Posterior vena cava (tissue), 2 donors: ENCODE measurements at regions of chr12 and their contacts with region 1.

Region 1: GRCh38 chr12:29552324-29552927 is 54.9 kb upstream of the OVCH1 start:
- DNase-seq: peak; percentile 83

Region 2: DNA sequence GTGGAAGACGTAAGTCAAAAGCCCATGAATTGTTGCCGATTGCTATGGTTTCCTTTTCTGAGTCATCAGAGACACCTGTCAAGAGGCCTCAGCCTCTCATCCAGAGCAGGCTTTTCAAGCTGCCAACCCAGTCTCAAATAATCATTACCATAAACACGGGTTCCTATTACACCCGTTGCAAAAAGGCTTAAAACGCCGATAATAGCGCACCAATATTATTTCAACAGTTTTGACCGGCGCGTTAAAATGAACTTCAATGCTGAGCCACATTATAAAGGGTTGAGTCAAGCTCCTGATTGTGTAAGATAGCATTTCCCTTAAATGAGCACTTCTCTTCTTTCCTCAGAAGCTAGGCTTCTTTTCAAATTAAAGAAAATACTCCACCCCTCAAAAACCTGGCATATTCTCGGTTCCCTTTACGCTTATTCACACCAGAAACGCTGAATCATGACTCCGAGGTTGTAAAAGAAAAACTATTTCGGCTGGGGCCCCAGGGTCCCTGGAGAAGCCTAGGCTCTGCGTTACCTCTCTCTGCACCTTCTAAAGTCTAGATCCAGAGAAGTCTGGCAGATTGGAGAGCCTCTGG is 230.0 kb after region 1 on chr12:
- intact Hi-C with region 1: loop called in 1 of 2 experiments (anchors 5 kb)
- DNase-seq: no peak